ENCODE measurements at regions of chr2 and their contacts with region 1.

Region 1: GRCh38 chr2:85648619-85649018 is 19.4 kb downstream of the SFTPB start:
- DNase-seq: peak; percentile 39
- H3K4me3 ChIP-seq: no peak overlapping the region
- H3K27ac ChIP-seq: peak overlapping the region; percentile 98
- H3K27me3 ChIP-seq: no peaks in the 10 kb centered on the region
- CTCF ChIP-seq: peak; percentile 71

Region 2: DNA sequence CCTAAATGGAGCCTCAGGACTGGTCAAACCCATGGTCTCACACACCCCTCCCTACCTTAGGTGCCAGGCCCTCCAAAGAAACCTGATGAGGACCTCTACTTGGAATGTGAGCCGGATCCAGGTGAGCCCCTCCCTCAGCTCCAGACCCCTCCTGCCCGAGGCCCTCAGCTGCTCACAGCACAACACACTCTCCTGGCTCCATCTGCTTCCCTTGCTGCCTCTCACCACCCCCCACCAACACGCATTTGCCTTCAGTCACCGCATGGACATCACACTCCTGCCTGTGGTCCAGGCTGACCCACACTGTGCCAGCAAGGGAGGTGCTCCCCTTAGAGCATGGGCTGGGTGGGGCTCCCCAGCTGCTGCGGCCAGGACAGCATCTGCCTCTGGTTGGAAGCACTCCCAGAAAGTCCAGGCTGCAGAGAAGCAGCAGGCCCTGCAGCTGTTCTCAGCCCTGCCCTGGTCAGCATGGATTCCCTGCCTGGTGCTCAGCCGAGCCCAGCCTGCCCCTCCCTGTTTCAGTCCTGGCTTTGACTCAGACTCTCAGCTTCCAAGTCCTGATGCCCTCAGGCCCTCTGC is 215.0 kb before region 1 on chr2:
- CTCF ChIA-PET with region 1: no interaction called
- POLR2A ChIA-PET with region 1: no interaction called
- DNase-seq: peak; percentile 93
- H3K4me3 ChIP-seq: no peak overlapping the region
- H3K27ac ChIP-seq: peak overlapping the region; percentile 73
- H3K27me3 ChIP-seq: no peaks in the 10 kb centered on the region
- CTCF ChIP-seq: no peak

Region 3: DNA sequence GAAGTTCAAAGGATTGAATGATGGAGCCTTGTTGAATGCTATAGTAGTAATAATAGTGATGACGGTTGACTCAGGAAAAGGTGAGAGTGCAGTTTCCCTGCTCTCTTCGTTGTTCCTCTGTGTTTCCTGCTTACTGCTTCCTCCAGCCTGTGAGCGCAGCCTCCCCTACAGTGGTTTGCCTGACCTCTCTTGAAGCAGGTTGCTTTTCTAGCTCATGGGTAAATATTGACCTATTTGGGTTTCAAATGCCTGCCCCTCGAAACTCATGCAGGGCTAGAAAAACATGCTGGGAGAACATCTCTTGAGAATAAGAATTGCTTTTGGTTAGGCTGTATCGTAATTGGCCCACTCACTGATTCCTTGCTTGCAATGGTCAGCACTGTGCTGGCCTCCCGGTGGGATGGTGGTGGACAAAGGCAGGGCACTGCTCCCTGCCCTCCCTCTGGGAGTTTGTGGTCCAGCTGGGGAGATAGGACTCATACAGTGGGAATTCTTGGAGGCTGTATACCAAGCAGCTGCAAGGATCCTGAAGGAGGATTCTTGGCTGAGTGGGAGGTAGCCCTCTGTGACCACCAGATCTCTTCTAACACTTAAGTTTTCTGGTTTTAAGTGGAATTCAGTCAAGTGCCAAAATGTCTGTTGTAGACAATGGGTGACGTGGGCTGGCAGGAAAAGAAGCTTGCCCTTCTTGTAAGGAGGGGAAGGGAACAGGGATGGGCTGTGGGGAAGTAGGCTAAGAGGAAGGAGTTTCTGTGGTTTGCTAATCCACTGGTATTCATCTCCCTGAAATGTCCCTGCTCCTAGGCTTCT is 58.4 kb before region 1 on chr2:
- CTCF ChIA-PET with region 1: no interaction called
- POLR2A ChIA-PET with region 1: no interaction called
- DNase-seq: peak; percentile 79
- H3K4me3 ChIP-seq: no peak overlapping the region
- H3K27ac ChIP-seq: peak overlapping the region; percentile 95
- H3K27me3 ChIP-seq: no peaks in the 10 kb centered on the region
- CTCF ChIP-seq: no peak

Region 4: DNA sequence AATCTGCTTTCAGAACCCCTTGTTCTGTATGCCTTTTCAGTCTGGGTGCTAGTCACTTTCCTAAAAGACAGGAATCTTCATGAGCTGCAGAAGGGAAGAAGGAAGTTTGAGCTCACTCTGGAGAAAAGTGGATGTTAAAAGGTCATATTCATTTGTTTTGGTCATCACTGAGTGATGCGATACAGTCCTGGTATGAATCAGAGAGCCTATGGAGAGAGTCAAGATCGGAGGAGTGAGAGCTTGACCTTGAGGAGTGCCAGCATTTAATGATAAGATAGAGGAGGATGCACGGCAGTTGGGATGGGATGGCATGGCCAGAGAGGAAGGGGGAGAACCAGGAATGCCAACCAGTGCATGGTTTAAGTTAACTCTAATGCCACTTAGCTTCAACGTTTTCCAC is 13.0 kb before region 1 on chr2:
- CTCF ChIA-PET with region 1: interaction called, 45 read pairs
- POLR2A ChIA-PET with region 1: interaction called, 7 read pairs
- DNase-seq: no peak
- H3K4me3 ChIP-seq: no peak overlapping the region
- H3K27ac ChIP-seq: peak overlapping the region; percentile 21
- H3K27me3 ChIP-seq: no peaks in the 10 kb centered on the region
- CTCF ChIP-seq: no peak

Region 5: GRCh38 chr2:85661139-85661858 is 12.7 kb after region 1 on chr2:
- CTCF ChIA-PET with region 1: interaction called, 11 read pairs
- POLR2A ChIA-PET with region 1: interaction called, 3 read pairs
- DNase-seq: no peak
- H3K4me3 ChIP-seq: no peak overlapping the region
- H3K27ac ChIP-seq: no peak overlapping the region
- H3K27me3 ChIP-seq: no peaks in the 10 kb centered on the region
- CTCF ChIP-seq: no peak

Region 6: DNA sequence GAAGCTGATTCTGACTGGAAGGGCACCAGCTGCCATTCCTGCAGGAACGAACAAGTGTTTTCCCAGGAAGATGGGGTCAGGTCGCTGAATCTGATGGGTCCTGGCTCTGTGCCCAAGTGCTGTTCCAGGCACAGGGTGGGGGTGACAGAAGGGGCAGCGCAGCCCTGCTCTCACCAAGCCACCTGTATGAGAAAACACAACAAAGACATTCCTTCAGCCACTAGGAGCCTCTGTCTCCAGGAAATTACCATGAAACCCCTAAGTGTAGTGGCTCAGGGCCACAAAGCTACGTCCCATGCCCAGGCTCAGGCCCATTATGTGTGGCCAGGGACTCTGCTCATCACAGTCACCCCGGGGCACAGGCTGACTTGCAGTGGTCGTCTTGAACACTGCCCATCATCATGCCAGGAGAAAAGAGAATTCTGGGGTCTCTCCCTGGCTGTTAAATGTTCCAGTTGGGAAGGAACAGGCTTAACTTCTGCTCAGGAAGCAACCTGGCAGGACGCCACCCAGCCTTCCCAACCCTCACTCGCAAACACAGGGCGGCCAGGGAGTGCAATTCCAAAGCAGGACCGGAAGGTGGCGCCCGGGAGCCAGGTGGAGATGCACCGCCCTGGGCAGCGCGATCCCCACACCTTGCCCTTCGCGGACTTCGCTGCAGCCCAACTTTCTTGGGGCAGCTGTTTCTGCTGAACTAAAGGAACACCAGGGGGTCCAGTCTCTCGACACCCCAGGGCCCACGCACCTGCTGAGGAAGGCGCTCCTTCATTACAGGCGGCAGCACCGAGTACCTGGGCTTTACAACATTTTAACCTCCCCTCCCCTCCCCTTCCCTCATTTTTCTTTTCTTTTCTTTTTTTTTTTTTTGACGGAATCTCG is 30.4 kb after region 1 on chr2:
- CTCF ChIA-PET with region 1: interaction called, 10 read pairs
- POLR2A ChIA-PET with region 1: no interaction called
- DNase-seq: no peak
- H3K4me3 ChIP-seq: no peak overlapping the region
- H3K27ac ChIP-seq: no peak overlapping the region
- H3K27me3 ChIP-seq: peaks cover 8% of the 10 kb centered on the region
- CTCF ChIP-seq: peak; percentile 95

Region 7: DNA sequence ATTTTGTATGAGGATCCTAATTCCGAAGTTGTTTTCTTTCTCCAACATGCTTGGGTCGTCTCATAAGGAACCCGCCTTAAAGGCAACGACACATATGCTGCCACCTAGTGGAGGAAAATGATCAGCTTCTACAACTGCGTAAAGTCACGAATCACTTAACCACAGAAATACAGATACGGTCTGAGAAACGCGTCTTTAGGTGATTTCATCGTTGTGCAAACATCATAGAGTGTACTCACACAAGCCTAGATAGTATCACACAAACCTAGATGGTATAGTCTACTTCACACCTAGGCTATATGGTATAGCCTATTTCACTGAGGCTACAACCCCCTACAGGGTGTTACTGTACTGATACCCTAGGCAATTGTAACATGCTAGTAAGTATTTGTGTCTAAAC is 58.7 kb after region 1 on chr2:
- CTCF ChIA-PET with region 1: interaction called, 107 read pairs
- POLR2A ChIA-PET with region 1: interaction called, 5 read pairs
- DNase-seq: peak; percentile 87
- H3K4me3 ChIP-seq: no peak overlapping the region
- H3K27ac ChIP-seq: no peak overlapping the region
- H3K27me3 ChIP-seq: no peaks in the 10 kb centered on the region
- CTCF ChIP-seq: peak; percentile 89

Region 8: DNA sequence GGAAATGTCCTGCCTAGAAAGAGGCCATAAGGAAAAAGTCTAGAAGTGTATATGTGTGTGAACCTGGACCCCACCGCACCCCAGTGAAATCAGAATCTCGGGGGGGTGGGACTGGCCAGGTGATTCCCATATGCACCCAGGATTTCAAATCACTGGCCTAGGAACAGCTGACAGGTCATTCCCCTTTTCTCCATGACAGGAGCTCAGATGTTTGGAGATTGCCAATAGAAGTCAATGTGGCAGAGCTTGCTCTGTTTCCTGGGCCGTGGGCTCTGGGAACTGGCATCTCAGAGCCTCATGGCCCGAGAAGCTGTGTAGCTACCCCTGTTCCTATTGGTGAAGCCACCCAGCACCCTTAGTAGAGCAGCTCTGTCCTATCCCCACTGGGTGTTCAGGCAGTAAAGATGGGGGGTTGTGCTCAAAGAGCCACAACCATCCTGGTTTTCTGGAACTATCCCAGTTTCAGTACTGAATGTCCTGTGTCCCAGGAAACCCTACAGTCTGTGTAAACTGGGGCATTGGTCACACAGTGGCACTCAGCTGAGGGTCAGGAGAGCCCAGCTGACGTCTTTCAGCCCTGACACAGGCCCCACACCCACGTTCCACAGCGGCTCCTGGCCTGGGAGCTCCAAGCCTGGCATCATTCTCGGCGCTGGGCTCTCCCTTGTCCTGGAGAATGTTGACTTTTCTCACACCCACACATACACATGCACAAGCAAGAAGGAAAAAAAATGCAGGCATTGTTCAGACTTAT is 64.4 kb after region 1 on chr2:
- CTCF ChIA-PET with region 1: interaction called, 107 read pairs
- POLR2A ChIA-PET with region 1: interaction called, 13 read pairs
- DNase-seq: no peak
- H3K4me3 ChIP-seq: no peak overlapping the region
- H3K27ac ChIP-seq: no peak overlapping the region
- H3K27me3 ChIP-seq: peaks cover 5% of the 10 kb centered on the region
- CTCF ChIP-seq: no peak

Region 9: DNA sequence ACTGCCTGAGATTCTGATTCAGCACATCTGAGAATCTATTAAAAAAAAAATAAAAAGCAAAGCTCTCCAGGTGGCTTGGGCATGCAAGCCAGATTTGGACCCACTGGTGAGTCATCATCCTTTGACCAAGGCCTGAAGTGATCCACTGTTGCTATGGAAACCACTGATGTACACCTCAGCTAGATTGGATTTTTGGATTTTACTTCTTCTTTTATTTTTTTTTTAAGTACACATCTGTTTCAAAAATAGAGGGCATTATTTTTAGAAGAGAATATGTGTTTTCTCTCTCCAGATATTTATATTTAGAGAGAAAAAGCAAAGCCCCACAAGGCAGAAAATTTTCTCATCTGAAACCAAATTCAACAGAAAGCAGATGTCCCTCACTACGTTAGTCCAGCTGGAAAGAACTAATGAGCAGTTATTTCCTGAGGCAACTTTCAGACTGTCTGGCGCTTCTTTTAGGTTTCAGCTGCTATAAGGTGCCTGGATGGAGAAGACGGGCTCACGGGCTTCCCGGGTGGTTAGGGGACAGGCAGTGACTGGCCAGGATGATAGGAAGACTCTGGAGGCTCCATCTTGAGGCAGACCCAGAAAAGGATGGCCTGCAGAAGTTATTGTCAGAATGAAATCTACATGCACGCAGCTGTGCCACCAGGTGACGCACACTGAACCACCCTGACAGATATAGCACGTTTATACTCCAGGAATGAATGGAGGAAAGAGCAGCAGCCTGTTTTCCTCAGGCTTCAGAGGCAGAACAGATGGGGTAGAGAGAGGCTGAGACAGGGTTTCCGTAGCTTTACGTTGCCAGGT is 601.2 kb after region 1 on chr2:
- CTCF ChIA-PET with region 1: no interaction called
- POLR2A ChIA-PET with region 1: no interaction called
- DNase-seq: peak; percentile 57
- H3K4me3 ChIP-seq: no peak overlapping the region
- H3K27ac ChIP-seq: peak overlapping the region; percentile 42
- H3K27me3 ChIP-seq: peaks cover 21% of the 10 kb centered on the region
- CTCF ChIP-seq: no peak

Measured in AG04450 (cell line).